ENCODE measurements at regions of chr15 and their contacts with region 1.

Region 1: DNA sequence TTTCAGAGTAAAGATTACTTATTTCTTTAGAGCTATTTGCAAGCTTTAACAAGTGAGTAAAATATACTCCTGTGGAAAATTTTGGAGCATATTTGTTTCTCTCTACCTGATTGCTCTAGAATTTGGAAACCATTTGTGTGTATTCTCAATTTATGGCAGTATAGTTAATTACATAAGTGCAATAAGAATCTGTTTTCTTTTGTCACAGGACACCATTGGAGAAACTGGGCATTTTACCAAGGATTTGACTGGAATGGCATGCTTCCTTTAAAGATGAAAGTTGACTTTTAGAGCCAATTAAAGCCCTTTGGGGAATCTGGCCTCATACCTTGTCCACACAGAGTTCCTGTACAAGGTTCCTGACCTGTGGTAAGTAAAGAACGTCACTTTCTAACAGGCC is 38.4 kb downstream of the PAQR5 start:
- DNase-seq: no peak
- ATAC-seq: no peak
- H3K4me3 ChIP-seq: no peak overlapping the region
- H3K27ac ChIP-seq: no peak overlapping the region
- H3K4me1 ChIP-seq: no peaks in the 10 kb centered on the region
- H3K27me3 ChIP-seq: no peaks in the 10 kb centered on the region
- CTCF ChIP-seq: no peak

Region 2: GRCh38 chr15:69117431-69117871 is 219.7 kb before region 1 on chr15:
- CTCF ChIA-PET with region 1: interaction called, 14 read pairs
- POLR2A ChIA-PET with region 1: no interaction called
- in situ Hi-C with region 1: no loop called
- intact Hi-C with region 1: no loop called
- DNase-seq: no peak
- ATAC-seq: no peak
- H3K4me3 ChIP-seq: no peak overlapping the region
- H3K27ac ChIP-seq: no peak overlapping the region
- H3K4me1 ChIP-seq: no peaks in the 10 kb centered on the region
- H3K27me3 ChIP-seq: peaks cover 20% of the 10 kb centered on the region
- CTCF ChIP-seq: no peak

Region 3: DNA sequence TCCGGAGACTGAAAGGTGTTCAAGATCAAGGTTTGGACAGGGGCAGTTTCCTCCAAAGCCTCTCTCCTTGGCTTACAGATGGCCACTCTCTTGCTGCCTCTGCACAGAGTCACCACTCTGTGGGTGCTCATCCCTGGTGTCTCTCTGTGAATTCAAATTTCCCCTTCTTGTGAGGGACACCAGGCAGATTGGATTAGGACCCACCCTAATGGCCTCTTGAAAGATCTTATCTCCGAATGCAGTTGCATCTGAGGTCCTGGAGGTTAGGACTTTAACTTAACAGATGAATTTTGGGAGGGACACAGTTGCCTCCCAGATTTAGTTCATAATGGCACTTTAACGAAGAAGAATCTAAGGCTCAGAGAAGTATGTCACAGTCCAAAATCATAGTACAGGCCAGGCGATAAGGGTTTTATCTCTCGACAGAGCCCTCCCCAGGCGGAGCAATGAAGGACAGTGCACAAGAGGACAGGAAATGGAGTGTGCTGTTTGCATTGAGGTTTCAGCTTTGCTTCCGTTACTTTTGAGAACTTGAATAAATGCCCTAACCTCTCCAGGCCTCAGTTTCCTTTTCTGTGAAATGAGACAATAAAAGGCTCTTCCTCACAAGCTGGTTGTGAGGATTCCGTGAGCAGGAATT is 38.1 kb after region 1 on chr15:
- CTCF ChIA-PET with region 1: no interaction called
- POLR2A ChIA-PET with region 1: no interaction called
- in situ Hi-C with region 1: no loop called
- intact Hi-C with region 1: no loop called
- DNase-seq: no peak
- ATAC-seq: no peak
- H3K4me3 ChIP-seq: no peak overlapping the region
- H3K27ac ChIP-seq: no peak overlapping the region
- H3K4me1 ChIP-seq: no peaks in the 10 kb centered on the region
- H3K27me3 ChIP-seq: no peaks in the 10 kb centered on the region; the same call in 1 of the 2 replicates
- CTCF ChIP-seq: no peak

Measured in Panc1 (cell line).